Activated CD4-positive, alpha-beta memory T cell treated with anti-CD3 and anti-CD28 coated beads, Interleukin-2, amount 10 ng/mL, durations not matched to agents 7 days and 5 days (primary cell): ENCODE measurements at regions of chr2 and their contacts with region 1.

Region 1: GRCh38 chr2:231612179-231613053 is 19.8 kb downstream of the TEX44 start:
- DNase-seq: peak; percentile 95
- H3K4me3 Mint-ChIP-seq: peak overlapping the region; percentile 73
- H3K27ac Mint-ChIP-seq: peak overlapping the region; percentile 88
- H3K4me1 Mint-ChIP-seq: peaks cover 38% of the 10 kb centered on the region
- H3K27me3 Mint-ChIP-seq: no peaks in the 10 kb centered on the region

Region 2: GRCh38 chr2:231627384-231628120 is 15.1 kb after region 1 on chr2:
- CTCF ChIA-PET with region 1: interaction called, 15 read pairs
- POLR2A ChIA-PET with region 1: interaction called, 24 read pairs
- DNase-seq: no peak
- H3K4me3 Mint-ChIP-seq: no peak overlapping the region
- H3K27ac Mint-ChIP-seq: peak overlapping the region; percentile 74
- H3K4me1 Mint-ChIP-seq: peaks cover 15% of the 10 kb centered on the region
- H3K27me3 Mint-ChIP-seq: peaks cover 2% of the 10 kb centered on the region

Region 3: DNA sequence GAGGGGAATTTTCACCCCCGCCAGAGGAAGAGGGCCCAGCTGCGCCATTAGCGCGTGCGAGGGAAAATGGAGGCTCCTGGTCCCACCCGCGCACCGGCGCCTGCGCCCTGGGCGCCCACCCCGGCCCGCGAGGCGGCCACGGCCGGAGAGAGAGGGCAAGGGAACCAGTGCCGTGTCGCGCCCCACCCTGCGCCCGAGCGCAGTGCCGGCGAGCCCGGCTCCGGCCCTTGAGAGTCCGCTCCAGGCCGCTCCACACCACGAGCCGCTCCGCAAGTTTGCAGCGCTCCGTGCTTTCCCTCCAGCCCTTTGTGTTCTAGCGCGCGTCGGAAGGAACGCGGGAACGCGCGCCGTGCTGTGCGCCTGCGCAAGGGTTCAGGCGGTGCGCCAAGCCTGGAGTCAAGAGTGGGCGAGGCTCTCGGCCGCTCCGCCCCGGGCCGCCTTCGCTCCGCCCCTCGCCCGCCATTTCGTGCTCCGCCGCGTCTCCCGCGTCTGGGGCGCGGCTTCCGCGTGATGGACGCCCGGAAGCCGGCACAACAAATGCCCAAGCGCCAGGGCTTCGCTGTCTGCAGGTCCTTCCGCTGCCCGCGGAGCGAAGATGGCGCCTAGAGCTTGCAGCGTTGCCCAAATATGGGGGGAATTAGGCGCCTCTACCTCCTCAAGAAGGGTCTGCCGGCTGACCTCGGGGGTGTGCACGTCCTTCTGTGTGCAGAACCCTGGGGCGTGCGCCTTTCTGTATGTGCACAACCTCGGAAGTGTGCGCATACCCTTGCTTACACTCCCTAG is 49.8 kb after region 1 on chr2:
- CTCF ChIA-PET with region 1: interaction called, 3 read pairs
- POLR2A ChIA-PET with region 1: interaction called, 37 read pairs
- DNase-seq: peak; percentile 98
- H3K4me3 Mint-ChIP-seq: peak overlapping the region; percentile 73
- H3K27ac Mint-ChIP-seq: peak overlapping the region; percentile 90
- H3K4me1 Mint-ChIP-seq: peaks cover 31% of the 10 kb centered on the region
- H3K27me3 Mint-ChIP-seq: no peaks in the 10 kb centered on the region

Region 4: DNA sequence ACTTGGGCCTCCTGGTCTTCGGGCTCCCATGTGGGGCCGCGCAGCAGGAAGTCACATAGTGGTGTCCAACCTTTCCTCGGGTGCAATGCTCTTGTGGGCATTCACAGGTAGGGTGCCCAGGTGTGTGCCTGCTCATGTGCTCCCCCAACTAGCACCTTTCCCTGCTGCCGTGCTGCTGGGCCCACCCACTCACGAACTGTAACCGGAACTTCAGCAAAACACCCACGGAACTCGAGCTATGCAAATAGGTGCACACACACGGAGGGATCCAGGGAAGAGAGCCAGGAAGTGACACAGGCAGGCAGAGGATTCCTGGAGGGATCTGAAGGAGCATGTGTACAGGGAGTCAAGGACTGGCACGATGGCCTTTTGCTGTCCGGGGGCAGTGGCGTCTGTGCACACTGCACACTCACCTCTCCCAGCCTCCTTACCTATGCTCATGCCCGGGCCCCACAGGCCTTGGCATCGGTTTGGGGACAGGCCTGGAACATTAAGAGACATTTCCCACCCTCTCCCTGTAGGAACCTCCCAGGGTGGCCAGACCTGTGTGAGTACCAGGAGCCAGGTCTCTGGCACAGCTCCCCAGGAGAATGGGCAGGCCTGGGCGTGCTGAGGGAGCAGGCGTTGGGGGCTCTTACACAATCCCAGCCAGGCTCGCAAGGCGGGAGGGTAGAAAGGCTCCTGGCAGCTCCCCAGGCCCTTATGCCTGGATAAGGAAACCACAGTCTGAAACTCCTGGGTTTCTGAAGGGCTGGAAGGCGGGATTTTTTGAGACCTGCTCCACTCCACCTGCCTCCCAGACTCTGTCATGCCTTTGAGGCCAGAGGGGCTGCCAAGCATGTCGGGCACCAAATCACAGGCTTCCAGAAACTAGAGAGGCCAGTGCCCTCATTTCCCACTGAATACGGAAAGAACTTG is 89.3 kb after region 1 on chr2:
- CTCF ChIA-PET with region 1: interaction called, 67 read pairs
- POLR2A ChIA-PET with region 1: interaction called, 120 read pairs
- DNase-seq: no peak
- H3K4me3 Mint-ChIP-seq: no peak overlapping the region
- H3K27ac Mint-ChIP-seq: no peak overlapping the region
- H3K4me1 Mint-ChIP-seq: peaks cover 14% of the 10 kb centered on the region
- H3K27me3 Mint-ChIP-seq: no peaks in the 10 kb centered on the region

Region 5: DNA sequence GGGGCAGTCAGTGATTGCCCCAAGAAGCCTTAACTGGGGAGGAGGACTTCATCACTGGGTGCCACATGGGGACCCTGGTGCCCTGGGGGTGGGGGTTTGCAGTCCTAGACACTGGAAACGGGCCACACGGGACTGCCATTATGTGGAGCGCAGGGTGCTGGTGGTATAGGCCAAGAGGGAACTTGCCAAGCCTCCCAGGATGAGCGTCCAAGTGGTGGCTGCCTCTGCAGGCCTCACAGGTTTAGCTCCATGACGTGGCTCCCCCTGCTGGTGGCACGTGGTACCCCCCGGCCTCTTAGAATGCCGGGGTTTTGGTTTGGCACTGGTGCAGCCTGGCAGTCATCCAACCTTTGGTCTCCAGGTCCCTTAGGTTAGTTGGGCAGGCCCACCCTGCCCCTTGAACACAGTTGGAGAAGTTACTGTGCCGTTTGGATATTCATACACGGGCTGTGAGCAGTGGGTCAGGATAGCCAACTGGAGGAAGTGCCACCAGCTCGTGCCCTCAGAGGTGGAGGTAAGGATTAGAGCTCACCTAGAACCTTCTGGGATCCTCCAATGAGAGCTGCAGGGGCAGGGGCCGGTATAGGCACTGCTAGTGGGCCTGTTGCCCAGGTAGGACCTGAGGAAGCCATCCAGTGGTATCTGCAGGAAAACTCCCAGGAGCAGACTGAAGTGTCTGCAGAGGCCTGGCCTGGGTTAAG is 101.5 kb after region 1 on chr2:
- CTCF ChIA-PET with region 1: interaction called, 144 read pairs
- POLR2A ChIA-PET with region 1: interaction called, 120 read pairs
- DNase-seq: peak; percentile 90
- H3K4me3 Mint-ChIP-seq: peak overlapping the region; percentile 17
- H3K27ac Mint-ChIP-seq: peak overlapping the region; percentile 94
- H3K4me1 Mint-ChIP-seq: peaks cover 28% of the 10 kb centered on the region
- H3K27me3 Mint-ChIP-seq: no peaks in the 10 kb centered on the region

Region 6: DNA sequence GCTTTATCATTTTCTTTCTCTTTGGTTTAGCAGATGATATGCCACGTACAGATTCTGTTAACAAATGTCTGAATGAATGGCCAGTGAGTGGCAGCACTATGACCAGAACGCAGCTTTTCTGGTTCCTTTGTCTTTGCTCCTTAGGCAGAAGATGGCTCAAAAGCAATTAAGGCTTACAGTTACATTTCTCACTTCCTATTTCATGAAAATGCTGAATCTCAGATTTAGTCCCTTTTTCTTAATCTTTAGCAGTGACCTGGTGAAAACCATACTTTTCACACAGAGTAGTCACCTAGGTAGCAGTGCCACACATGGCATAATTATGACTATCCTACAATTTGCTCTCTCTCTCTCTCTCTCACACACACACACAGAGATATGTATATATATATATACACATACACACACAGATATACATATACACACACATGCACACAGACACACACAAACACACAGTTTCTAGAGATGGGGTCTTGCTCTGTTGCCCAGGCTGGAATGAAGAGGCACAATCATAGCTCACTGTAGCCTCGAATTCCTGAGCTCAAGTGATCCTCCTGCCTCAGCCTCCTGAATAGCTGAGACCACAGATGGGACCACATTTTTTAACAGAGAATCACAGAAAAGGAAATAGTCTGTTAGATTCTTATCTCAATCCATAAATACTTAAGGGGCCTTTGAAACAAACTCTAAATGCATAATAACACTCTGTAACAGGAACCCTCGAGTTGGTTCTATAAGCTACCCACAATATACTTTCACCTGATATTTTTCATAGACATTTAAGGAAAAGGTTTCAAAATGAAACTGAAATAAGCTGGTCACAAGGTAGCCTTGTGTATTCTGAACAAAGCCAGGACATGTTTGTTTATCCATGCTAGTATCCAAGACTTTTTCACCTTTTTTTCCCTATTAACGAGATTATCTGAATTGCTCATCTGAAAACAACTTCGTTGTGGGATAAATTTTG is 157.0 kb after region 1 on chr2:
- CTCF ChIA-PET with region 1: no interaction called
- POLR2A ChIA-PET with region 1: no interaction called
- DNase-seq: no peak
- H3K4me3 Mint-ChIP-seq: no peak overlapping the region
- H3K27ac Mint-ChIP-seq: no peak overlapping the region
- H3K4me1 Mint-ChIP-seq: peaks cover 29% of the 10 kb centered on the region
- H3K27me3 Mint-ChIP-seq: no peaks in the 10 kb centered on the region

Region 7: DNA sequence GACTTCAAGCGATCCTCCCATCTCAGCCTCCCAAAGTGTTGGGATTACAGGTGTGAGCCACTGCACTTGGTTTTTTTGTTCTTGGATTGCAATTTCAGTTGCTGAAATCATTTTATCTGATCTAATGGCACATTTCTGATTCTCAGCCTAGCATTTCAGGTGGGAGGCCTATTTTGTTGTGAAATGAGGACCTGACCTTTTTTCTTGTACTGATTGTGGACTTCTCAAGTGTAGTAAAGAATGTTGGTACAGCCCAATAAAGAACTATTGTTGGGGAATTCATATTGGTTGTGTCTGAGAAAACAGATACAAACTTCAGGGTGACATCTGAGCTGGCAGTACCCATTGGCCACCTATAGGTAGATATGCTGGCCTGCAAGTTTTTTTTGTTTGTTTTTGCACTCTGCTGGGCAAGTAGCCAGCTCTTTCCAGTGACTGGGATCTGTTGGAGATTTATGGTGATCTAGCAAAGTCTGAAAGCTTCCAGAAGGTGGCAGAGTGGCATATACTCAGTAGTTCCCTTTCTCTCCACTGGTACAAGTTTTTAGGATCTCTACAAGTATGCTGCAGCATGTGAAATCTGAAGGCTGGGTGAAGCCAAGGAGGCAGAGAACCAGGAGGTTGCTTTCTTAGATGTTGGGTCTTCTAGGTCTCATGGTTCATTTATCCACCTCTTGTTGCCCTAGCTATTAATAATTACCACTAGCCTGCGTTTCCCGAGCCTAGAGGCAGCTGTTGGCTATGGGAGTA is 183.1 kb after region 1 on chr2:
- CTCF ChIA-PET with region 1: no interaction called
- POLR2A ChIA-PET with region 1: no interaction called
- DNase-seq: no peak
- H3K4me3 Mint-ChIP-seq: no peak overlapping the region
- H3K27ac Mint-ChIP-seq: no peak overlapping the region
- H3K4me1 Mint-ChIP-seq: no peaks in the 10 kb centered on the region
- H3K27me3 Mint-ChIP-seq: no peaks in the 10 kb centered on the region